PC-9 (cell line): ENCODE measurements at regions of chr1 and their contacts with region 1.

Region 1: DNA sequence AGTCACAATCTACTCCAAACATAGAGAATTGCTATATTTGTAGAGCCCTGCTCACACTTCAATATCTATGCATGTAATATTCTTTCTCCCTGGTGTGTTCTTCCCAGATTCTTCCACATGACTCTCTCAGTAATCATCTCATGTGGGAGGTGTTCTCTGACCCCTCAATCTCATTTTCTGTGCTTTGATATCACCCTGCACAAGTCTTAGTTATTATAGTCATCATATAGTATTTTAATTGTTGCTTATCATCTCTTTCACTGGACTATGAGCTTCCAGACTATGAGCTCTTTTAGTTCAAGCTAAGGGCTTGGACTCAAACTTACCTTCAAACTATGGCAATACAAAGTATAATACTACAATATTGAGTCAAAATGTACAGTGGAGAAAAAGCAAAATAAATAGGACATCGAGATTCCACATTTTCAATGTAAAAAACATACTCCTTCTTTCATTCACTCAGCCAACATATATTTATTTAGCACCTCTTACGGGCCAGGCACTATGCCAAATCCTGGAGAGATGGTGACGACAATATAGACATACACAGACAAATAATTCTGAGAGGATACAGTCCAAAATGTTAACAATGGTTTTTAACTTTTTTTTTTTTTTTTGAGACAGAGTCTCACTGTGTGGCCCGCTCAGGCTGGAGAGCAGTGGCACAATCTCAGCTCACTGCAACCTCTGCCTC is 12.7 kb downstream of the TESK2 start:
- DNase-seq: no peak
- H3K4me3 ChIP-seq: no peak overlapping the region
- H3K27ac ChIP-seq: no peak overlapping the region
- H3K4me1 ChIP-seq: no peaks in the 10 kb centered on the region
- H3K27me3 ChIP-seq: no peaks in the 10 kb centered on the region
- CTCF ChIP-seq: no peak

Region 2: GRCh38 chr1:46210561-46210960 is 732.3 kb after region 1 on chr1:
- CTCF ChIA-PET with region 1: no interaction called
- POLR2A ChIA-PET with region 1: interaction called, 15 read pairs
- intact Hi-C with region 1: no loop called
- DNase-seq: no peak
- H3K4me3 ChIP-seq: no peak overlapping the region
- H3K27ac ChIP-seq: no peak overlapping the region
- H3K4me1 ChIP-seq: peaks cover 8% of the 10 kb centered on the region; the same call in 1 of the 2 replicates
- H3K27me3 ChIP-seq: no peaks in the 10 kb centered on the region
- CTCF ChIP-seq: no peak